Activated T-helper 1 cell treated with anti-CD3 and anti-CD28 coated beads, Interleukin-12 subunit alpha, Interleukin-12 subunit beta, Interleukin-2, Interleukin-4 antibody, amounts not matched to agents 30 ng/mL and 10 ng/mL and 1 ng/mL, durations not matched to agents 14 hours and 24 hours and 36 hours (primary cell): ENCODE measurements at regions of chr20 and their contacts with region 1.

Region 1: DNA sequence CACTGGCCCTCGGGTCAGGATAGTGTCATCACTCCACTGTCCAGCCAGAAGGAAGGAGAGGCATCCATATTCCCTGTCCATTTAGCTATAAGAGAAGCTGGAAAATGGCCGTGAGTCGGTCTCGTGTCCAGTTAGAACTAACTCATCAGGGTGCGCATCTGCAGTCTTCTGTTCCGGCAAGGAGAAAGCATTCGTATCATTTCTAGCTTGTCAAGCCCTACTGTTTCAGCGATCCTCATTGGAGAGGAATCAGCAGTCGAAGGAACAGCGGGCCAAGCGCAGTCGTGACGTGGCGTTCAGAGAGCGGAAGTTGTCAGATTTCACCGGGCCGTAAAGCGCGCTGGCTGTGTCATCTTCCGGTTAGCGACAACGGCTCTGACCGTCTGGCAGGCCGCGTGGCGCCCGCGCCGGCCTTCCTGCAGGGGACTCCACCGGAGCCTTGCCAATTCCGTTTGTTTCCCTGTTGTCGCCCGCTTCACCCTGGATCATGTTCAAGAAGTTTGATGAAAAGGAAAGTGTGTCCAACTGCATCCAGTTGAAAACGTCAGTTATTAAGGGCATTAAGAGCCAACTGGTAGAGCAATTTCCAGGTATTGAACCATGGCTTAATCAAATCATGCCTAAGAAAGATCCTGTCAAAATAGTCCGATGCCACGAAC is 32.9 kb downstream of the HM13 start:
- DNase-seq: peak; percentile 78
- H3K4me3 Mint-ChIP-seq: peak overlapping the region; percentile 96
- H3K27ac Mint-ChIP-seq: peak overlapping the region; percentile 97
- H3K4me1 Mint-ChIP-seq: peaks cover 15% of the 10 kb centered on the region
- H3K27me3 Mint-ChIP-seq: no peaks in the 10 kb centered on the region

Region 2: GRCh38 chr20:31572701-31573554 is 25.8 kb after region 1 on chr20:
- intact Hi-C with region 1: loop called (anchors 2 kb)
- DNase-seq: peak; percentile 80
- H3K4me3 Mint-ChIP-seq: peak overlapping the region; percentile 88
- H3K27ac Mint-ChIP-seq: peak overlapping the region; percentile 88
- H3K4me1 Mint-ChIP-seq: peaks cover 20% of the 10 kb centered on the region
- H3K27me3 Mint-ChIP-seq: no peaks in the 10 kb centered on the region

Region 3: DNA sequence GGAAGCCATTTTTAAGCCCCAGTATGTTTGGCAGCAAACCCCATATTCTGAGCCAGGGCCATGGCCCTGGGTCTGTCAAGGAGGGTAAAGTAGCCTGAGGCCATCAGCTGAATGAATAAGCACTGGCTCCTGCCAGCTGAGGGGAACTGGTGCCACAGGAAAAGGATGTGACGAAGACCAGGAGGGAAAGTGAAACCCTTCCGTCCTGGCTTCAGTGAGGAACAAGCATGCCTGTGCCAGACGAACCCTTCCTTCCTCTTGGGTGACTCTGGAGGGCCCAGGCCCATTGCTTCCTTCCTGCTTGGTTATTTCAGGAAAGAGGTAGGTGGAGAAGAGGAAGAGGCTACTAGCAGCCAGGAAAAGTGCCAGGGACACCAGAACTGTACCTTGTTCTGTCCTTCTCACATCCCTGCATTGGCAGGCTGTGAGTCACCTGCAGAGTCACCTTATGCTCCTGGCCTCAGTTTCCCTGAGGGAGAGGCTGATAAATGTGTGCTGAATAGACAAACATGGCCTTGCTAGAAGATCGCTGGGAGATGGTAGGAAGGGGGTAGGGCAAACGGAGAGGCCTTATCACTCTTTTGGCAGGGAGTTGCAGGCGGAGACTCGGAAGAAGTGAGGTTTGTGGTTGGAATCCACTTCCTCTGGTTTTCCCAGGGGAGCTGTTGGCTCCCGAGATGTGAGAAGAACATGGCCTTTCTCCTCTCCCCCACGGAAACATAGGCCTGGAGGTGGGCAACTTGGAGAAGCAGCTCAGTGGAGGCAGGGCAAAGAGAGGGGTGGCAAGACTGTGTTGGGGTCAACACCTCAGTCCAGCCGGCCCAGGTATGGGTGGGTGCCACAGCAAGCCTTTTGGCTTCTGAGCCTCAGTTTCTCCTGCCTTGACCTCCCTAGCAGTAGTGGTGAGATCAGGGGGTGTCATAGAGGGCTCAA is 128.0 kb after region 1 on chr20:
- intact Hi-C with region 1: no loop called
- DNase-seq: peak; percentile 71
- H3K4me3 Mint-ChIP-seq: peak overlapping the region; percentile 86
- H3K27ac Mint-ChIP-seq: peak overlapping the region; percentile 90
- H3K4me1 Mint-ChIP-seq: peaks cover 89% of the 10 kb centered on the region
- H3K27me3 Mint-ChIP-seq: no peaks in the 10 kb centered on the region